Colonic mucosa (tissue), 4 donors: ENCODE measurements at regions of chr6 and their contacts with region 1.

Region 1: GRCh38 chr6:71383901-71384489 is 95.4 kb downstream of the OGFRL1 start:
- DNase-seq: no peak
- H3K4me3 ChIP-seq: no peak overlapping the region
- H3K27ac ChIP-seq: no peak overlapping the region
- H3K4me1 ChIP-seq: no peaks in the 10 kb centered on the region
- H3K27me3 ChIP-seq: no peaks in the 10 kb centered on the region
- CTCF ChIP-seq: peak; percentile 46

Region 2: DNA sequence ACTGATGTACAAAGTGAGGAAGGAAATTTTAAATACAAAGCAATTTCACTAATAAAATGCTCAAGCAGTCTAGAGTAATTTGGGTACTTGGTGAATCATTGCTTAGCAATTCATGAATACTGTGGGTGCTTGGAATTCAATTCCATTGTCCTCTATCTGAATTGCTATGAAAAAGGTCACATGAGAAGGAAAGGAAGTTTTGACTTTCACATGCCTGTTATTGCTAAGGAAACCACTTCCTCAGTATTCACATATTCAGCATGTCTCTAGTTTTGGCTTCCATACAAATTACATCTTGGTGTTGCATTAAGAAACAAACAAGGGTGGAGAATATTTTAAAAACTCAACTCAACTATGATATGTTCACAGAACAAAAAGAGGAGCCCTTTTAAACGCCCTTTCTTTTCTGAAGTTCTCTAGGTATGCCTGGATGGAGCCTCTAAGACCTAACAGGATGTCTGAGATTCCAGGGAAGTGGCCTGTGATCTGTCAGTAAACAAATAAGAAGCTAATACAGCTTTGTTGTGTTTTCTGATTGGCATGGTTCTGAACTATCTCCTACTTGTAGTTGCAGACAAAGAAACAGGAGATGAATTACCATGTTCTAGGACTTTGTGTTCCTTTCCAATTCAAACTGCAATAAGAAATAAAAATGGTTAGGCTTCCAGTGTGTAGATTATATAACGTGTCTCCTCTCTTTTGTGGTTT is 95.0 kb after region 1 on chr6:
- intact Hi-C with region 1: no loop called
- DNase-seq: no peak
- H3K4me3 ChIP-seq: no peak overlapping the region
- H3K27ac ChIP-seq: peak overlapping the region; percentile 2
- H3K4me1 ChIP-seq: no peaks in the 10 kb centered on the region
- H3K27me3 ChIP-seq: no peaks in the 10 kb centered on the region
- CTCF ChIP-seq: no peak

Region 3: DNA sequence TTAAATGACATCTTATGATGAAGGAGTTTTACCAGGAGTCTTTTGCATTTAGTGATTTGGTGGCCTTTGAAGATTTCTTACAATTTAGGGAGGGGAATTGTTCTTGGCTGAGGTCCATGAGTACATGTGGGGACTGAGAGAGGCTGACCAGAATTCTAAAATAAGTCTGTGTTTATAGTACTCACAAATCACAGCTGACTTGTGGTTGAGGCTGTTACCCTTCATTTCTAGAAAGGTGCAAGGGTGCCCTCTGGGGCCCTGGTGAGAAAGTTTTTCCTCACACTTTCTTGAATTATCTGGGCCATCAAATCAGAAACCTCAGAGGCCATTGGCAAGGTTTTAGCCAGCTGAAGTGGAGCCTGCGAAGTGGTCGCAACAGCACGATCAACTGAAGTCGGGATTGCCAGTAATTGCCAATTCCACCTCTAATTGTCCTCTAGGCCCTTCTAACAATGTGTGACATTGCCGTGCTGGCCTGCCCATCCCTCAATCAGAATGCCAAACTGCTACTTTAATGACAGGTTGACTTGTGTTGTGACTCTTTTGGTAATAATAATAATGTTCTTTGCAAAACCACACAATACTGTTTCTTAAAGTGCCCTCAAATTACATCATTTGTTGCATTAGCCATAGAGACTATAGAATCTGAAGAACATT is 126.2 kb after region 1 on chr6:
- intact Hi-C with region 1: loop called (anchors 2 kb)
- DNase-seq: peak; percentile 26
- H3K4me3 ChIP-seq: no peak overlapping the region
- H3K27ac ChIP-seq: no peak overlapping the region
- H3K4me1 ChIP-seq: no peaks in the 10 kb centered on the region
- H3K27me3 ChIP-seq: no peaks in the 10 kb centered on the region
- CTCF ChIP-seq: no peak